ENCODE measurements at regions of chr19 and their contacts with region 1.

Region 1: DNA sequence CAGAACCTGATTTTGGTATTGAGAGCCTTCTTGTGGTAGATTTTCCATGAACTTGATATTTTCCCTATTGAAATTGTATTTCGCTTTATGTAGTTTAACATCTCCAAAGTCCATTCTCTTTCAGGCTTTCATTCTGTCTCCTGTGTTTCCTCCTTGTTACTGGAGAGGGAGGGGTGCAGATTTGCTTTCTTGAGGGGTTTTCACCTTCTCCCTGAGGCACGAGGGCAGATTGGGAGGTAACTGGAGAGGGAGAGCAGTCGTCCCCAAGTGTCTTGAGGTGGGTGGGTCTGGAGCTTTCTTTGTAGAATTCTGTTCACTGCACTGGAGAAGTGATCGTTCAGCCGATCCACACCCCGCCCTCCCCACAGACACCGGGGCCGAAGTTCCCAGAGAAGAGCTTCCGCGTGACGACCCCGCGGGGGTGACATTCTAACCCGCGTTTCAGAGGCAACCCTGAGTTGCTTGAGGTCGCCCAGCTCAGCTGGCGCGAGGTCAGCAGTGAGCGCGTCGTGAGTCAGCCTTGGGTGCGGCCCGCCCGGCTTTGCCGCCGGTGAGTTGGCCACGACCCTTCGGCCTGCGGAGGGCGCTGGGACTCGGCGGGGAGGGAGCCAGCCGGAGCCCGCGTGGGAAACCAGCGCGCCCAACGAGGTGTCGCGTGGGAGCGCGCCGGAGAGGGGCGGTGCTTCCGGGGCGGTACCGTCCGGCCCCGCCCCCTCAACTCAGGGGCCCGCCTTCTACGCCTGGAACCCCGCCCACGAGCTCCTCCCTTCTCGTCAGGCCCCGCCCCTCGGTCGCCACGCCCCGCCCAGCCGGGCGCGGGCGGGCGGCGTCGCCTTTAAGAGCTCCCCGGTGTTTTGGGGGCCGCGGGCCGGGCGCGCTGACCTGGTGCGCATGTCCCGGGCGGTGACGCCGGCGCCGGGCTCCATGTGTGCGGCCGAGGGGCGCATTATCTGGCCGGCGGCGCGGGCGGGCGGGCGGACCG is at the start of gene GATAD2A:
- DNase-seq: peak; percentile 87
- H3K4me3 Mint-ChIP-seq: peak within 1 kb of the TSS; percentile 97
- H3K27ac Mint-ChIP-seq: peak within 1 kb of the TSS; percentile 95
- H3K4me1 Mint-ChIP-seq: peaks cover 52% of the 10 kb centered on the region
- H3K27me3 Mint-ChIP-seq: no peaks in the 10 kb centered on the region
- total RNA-seq, gene GATAD2A: 125 and 128 TPM in 2 replicates

Region 2: DNA sequence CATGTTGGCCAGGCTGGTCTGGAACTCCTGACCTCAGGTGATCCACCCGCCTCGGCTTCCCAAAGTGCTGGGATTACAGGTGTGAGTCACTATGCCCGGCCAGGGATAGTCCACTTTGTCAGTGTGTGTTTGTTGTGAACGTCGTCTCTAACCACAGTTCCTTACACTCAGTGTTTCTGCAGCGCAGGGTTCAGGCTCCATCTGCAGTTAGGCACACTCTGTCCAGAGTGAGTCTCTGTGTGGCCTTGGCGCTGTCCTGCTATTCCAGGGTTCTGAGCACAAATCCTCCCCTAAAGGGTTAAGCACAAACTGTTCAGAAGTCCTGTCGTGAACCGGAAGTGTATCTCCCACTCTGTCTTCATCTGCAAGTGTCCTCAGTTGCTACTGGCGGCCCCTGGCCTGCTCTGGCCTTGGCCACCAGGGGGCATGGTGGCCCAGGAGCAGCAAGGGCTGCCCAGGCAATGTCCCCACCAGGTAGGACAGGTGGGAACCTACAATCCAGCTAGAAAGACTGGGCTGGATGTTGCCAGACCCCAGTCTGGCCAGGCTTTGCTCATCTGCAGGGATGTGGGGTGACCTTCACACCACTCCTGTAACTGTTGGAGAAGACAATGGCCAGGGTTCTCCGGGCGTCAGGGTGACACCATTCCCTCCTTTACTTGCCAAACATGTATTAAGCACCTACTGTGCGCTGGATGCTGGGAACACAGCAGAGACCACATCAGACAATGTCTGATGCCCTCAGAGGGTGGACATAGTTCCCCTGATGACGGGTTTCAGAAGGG is 38.4 kb before region 1 on chr19:
- intact Hi-C with region 1: loop called (anchors 2 kb)
- DNase-seq: peak; percentile 68
- H3K4me3 Mint-ChIP-seq: peak overlapping the region; percentile 1
- H3K27ac Mint-ChIP-seq: peak overlapping the region; percentile 50
- H3K4me1 Mint-ChIP-seq: peaks cover 13% of the 10 kb centered on the region
- H3K27me3 Mint-ChIP-seq: no peaks in the 10 kb centered on the region

Region 3: DNA sequence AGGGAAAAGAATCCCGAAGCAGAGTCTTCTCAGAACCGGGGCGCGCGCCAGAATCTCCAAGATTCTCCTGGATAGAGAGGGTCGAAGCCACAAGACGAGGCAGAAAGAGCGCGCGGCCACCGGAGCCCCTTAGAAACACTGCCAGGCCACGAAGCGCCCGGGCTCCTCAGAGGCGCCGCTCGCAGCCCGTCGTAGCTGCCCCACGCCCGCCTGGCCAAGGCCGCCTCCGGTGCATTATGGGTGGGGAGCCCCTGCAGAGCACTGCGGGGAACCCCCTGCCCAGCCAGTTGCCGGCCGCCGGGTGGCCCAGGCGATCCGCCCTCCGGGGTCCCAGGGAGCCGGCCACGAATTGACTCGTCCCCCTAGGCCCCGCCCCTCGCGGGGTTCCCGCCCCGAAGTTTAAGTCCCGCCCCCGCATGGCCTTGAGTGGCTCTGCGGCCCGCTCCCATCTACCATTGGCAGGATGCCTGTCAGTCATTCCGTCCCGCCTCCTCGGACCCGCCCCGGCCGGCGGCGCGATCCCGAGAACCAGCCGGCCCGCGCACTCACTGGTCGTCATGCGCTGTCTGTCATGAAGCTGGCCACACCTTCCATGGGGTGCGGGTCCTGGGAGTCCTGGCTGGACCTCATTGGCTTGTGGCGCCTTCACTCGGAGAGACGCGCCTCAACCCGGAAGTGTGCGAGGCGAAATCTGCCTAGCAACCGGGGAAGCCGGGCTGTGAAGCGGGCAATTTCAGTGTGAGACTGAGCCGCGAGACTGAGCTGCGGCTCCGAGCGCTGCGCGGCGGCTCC is 19.9 kb before region 1 on chr19:
- intact Hi-C with region 1: loop called (anchors 1 kb)
- DNase-seq: peak; percentile 100
- H3K4me3 Mint-ChIP-seq: peak overlapping the region; percentile 84
- H3K27ac Mint-ChIP-seq: peak overlapping the region; percentile 91
- H3K4me1 Mint-ChIP-seq: peaks cover 39% of the 10 kb centered on the region
- H3K27me3 Mint-ChIP-seq: no peaks in the 10 kb centered on the region

Region 4: GRCh38 chr19:19459707-19460251 is 54.6 kb after region 1 on chr19:
- intact Hi-C with region 1: loop called (anchors 2 kb)
- DNase-seq: peak; percentile 66
- H3K4me3 Mint-ChIP-seq: peak overlapping the region; percentile 77
- H3K27ac Mint-ChIP-seq: peak overlapping the region; percentile 94
- H3K4me1 Mint-ChIP-seq: peaks cover 60% of the 10 kb centered on the region
- H3K27me3 Mint-ChIP-seq: no peaks in the 10 kb centered on the region

Region 5: DNA sequence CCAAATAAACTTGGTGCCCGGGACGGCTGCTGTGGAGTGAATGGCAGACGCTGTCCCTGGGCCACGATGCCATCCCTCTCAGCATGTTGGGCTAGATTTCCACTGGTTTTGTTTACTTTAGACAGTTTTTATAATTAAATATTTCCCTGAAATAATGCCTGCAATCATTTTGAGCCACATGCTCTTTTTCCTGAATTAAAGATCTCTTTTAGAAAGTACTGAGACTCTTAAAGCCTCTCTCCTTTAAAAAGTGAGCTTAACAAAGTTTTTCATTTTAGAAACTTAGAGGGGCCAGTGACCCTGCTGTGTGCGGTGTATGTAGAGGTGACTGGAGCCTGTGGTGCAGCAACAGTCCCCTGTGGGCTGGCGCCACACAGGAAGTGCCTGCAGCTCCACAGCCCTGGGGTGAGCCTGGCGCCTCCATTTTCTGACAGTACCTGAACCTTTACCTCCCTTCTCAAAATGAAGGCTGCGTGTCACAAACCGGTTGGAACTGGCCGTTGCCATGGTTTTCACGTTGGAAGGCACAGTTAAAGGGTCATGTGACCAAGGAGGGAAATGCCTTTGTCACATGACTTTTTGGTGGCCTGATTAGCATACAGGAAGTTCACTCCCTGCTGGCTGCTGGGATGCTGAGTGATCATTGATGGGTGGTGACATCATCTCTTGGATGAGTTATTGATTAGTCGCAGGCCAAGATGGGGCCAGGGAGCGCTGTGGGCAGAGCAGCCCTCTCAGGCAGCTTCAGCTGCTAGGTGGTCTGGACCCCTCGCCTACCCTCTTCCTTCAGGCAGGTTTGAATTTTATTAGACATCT is 83.9 kb after region 1 on chr19:
- intact Hi-C with region 1: loop called (anchors 1 kb)
- DNase-seq: peak; percentile 93
- H3K4me3 Mint-ChIP-seq: peak overlapping the region; percentile 53
- H3K27ac Mint-ChIP-seq: peak overlapping the region; percentile 98
- H3K4me1 Mint-ChIP-seq: peaks cover 36% of the 10 kb centered on the region
- H3K27me3 Mint-ChIP-seq: no peaks in the 10 kb centered on the region